CD4-positive, alpha-beta T cell (primary cell): ENCODE measurements at regions of chr3 and their contacts with region 1.

Region 1: GRCh38 chr3:85838921-85839320 is 880.1 kb downstream of the CADM2 start:
- DNase-seq: no peak
- ATAC-seq: no peak
- H3K4me3 ChIP-seq: no peak overlapping the region
- H3K4me3 Mint-ChIP-seq: no peak overlapping the region
- H3K27ac ChIP-seq: no peak overlapping the region
- H3K27ac Mint-ChIP-seq: no peak overlapping the region
- H3K4me1 ChIP-seq: no peaks in the 10 kb centered on the region
- H3K4me1 Mint-ChIP-seq: no peaks in the 10 kb centered on the region
- H3K27me3 ChIP-seq: no peaks in the 10 kb centered on the region
- H3K27me3 Mint-ChIP-seq: no peaks in the 10 kb centered on the region
- CTCF ChIP-seq: no peak

Region 2: DNA sequence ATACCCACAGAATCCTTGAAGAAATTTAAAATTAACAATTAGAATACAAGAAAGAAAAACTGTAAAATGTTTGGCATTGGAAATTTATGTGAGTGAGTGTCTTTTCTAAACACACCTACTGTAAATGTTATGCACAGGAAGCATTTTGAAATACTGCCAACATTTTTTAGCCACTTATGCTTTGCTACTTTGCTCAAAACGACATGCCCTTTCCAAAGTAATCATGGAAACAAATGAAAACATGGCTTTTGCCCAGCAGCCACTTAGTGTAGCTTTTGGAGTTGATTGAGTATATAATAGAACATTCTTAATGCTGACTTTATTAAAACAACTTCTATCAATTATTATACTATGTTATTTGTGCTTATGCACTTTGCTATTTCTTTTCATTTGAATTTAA is 57.1 kb before region 1 on chr3:
- CTCF ChIA-PET with region 1: no interaction called
- POLR2A ChIA-PET with region 1: interaction called, 3 read pairs
- intact Hi-C with region 1: loop called in 1 of 2 experiments (anchors 10 kb)
- DNase-seq: no peak
- ATAC-seq: no peak
- H3K4me3 ChIP-seq: no peak overlapping the region
- H3K4me3 Mint-ChIP-seq: no peak overlapping the region
- H3K27ac ChIP-seq: no peak overlapping the region
- H3K27ac Mint-ChIP-seq: no peak overlapping the region
- H3K4me1 ChIP-seq: no peaks in the 10 kb centered on the region
- H3K4me1 Mint-ChIP-seq: no peaks in the 10 kb centered on the region
- H3K27me3 ChIP-seq: no peaks in the 10 kb centered on the region
- H3K27me3 Mint-ChIP-seq: no peaks in the 10 kb centered on the region
- CTCF ChIP-seq: no peak

Region 3: GRCh38 chr3:85960793-85961192 is 121.9 kb after region 1 on chr3:
- CTCF ChIA-PET with region 1: no interaction called
- POLR2A ChIA-PET with region 1: no interaction called
- intact Hi-C with region 1: no loop called
- DNase-seq: no peak
- ATAC-seq: no peak
- H3K4me3 ChIP-seq: no peak overlapping the region
- H3K4me3 Mint-ChIP-seq: no peak overlapping the region
- H3K27ac ChIP-seq: no peak overlapping the region
- H3K27ac Mint-ChIP-seq: no peak overlapping the region
- H3K4me1 ChIP-seq: no peaks in the 10 kb centered on the region
- H3K4me1 Mint-ChIP-seq: no peaks in the 10 kb centered on the region
- H3K27me3 ChIP-seq: no peaks in the 10 kb centered on the region
- H3K27me3 Mint-ChIP-seq: no peaks in the 10 kb centered on the region
- CTCF ChIP-seq: no peak